Common myeloid progenitor, CD34-positive (primary cell): ENCODE measurements at regions of chr3 and their contacts with region 1.

Region 1: DNA sequence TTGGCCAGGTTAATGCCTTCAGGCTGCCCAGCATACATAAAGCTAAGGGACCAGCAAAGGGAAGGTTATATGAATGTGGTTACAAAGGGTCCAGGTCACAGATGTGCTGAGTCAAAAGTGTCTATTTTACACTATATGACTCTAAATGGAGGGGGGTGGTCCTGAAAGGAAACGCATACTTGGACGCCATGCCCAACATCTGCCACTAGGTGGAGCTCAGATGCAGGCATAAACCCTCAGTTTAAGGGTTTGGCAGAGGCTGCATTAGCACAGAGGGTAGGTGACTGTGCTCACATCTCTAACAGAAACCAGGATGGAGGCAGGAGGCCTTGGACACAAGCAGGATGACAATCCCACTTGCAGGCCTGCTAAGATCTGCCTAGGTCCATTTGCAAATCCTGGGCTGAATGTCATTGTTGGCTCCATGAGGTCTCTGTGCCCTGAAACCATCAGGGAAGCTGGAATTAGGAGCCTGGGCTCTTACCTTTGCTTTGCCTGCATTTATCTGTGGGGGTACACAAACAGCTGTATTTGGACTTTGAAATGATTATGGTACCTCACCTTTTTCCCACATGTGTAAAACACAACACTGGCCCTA is 55.8 kb downstream of the ZNF621 start:
- DNase-seq: peak; percentile 67 to 87 (median 82)
- H3K4me3 ChIP-seq: no peak overlapping the region
- H3K27ac ChIP-seq: no peak overlapping the region
- H3K4me1 ChIP-seq: peaks cover 0 to 3% (median 0%) of the 10 kb centered on the region in 4 experiments
- H3K27me3 ChIP-seq: peaks cover 0 to 8% (median 0%) of the 10 kb centered on the region in 5 experiments

Region 2: DNA sequence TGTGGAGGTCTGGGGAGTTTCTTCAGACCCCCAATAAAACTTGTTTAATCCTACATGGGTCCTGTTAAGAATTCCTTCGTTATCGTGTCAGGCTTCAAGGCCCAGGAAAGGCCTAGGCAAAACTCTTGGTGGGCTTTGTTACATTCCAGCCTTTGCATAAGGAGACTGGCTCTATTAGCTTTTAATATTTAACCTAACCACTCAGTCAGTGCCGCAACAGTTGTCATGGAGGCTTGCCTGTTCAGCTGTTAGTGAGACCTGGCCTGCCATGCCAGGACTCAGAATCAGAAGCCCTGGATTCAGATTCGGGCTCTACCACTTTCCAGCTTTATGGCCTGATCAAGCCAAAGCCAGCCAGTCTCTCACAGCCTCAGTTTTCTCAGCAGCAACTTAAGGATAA is 251.5 kb before region 1 on chr3:
- CTCF ChIA-PET with region 1: interaction called, 15 read pairs
- POLR2A ChIA-PET with region 1: no interaction called
- DNase-seq: no peak
- H3K4me3 ChIP-seq: no peak overlapping the region
- H3K27ac ChIP-seq: no peak overlapping the region
- H3K4me1 ChIP-seq: no peaks in the 10 kb centered on the region
- H3K27me3 ChIP-seq: no peaks in the 10 kb centered on the region

Region 3: DNA sequence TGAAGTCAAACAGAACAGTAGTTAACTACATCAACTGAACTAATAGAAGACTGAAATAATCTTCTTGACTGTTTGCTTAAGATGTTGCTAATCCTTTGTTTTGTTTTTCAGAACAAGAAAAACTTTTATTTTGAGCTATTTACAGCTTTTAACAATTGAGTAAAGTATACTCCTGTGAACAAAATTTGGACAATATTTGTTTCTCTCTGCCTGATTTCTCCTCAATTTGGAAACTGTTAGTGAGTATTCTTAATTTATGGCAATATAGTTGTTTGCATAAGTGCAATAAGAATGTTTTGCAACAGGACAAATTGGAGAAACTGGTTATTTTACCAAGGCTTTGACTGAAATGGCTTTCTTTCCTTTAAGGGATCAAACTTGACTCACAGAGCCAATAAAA is 230.1 kb before region 1 on chr3:
- CTCF ChIA-PET with region 1: no interaction called
- POLR2A ChIA-PET with region 1: no interaction called
- DNase-seq: peak in 1 of 3 donors; percentile 18
- H3K4me3 ChIP-seq: no peak overlapping the region
- H3K27ac ChIP-seq: no peak overlapping the region
- H3K4me1 ChIP-seq: no peaks in the 10 kb centered on the region
- H3K27me3 ChIP-seq: no peaks in the 10 kb centered on the region

Region 4: DNA sequence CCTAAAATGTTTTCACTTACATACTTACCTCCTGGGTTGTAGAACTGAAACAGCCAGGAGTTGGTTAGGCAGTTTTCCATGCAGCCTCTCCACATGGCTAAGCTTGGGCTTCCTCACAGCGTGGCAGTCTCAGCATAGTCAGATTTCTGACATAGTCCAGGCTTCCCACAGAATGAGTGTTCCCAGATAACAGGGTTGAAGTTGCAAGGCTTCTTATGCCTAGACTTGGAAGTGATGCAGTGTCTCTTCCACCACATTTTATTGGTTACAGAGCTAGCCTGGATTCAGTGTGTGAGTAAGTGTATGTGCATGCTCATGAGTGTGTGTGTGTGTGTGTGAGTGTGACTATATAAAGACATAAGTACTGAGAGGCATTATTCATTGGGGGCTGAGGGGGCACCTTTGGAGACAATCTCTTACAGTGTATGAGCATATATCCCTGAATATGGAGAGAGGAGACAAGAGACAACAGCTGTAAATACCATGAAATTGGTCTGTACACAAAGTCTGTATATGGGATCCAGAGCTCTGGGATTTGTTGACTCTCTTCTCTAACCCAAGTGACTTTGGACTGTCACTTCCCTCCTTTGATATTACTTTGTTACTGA is 22.3 kb after region 1 on chr3:
- CTCF ChIA-PET with region 1: interaction called, 15 read pairs
- POLR2A ChIA-PET with region 1: no interaction called
- DNase-seq: no peak
- H3K4me3 ChIP-seq: no peak overlapping the region
- H3K27ac ChIP-seq: no peak overlapping the region
- H3K4me1 ChIP-seq: no peaks in the 10 kb centered on the region
- H3K27me3 ChIP-seq: no peaks in the 10 kb centered on the region

Region 5: GRCh38 chr3:41881233-41881821 is 1300.7 kb after region 1 on chr3:
- CTCF ChIA-PET with region 1: interaction called, 127 read pairs
- POLR2A ChIA-PET with region 1: no interaction called
- DNase-seq: peak; percentile 48 to 74 (median 69)
- H3K4me3 ChIP-seq: no peak overlapping the region
- H3K27ac ChIP-seq: no peak overlapping the region
- H3K4me1 ChIP-seq: no peaks in the 10 kb centered on the region
- H3K27me3 ChIP-seq: no peaks in the 10 kb centered on the region